ENCODE measurements at regions of chr17 and their contacts with region 1.

Region 1: GRCh38 chr17:41665566-41666236 is 23.0 kb upstream of the EIF1 start:
- DNase-seq: peak; percentile 98
- H3K4me3 Mint-ChIP-seq: peak overlapping the region; percentile 89
- H3K27ac Mint-ChIP-seq: peak overlapping the region; percentile 99
- H3K4me1 Mint-ChIP-seq: peaks cover 48% of the 10 kb centered on the region
- H3K27me3 Mint-ChIP-seq: peaks cover 12% of the 10 kb centered on the region

Region 2: GRCh38 chr17:40559954-40560591 is 1105.6 kb before region 1 on chr17:
- intact Hi-C with region 1: loop called (anchors 5 kb)
- DNase-seq: peak; percentile 95
- H3K4me3 Mint-ChIP-seq: peak overlapping the region; percentile 95
- H3K27ac Mint-ChIP-seq: peak overlapping the region; percentile 100
- H3K4me1 Mint-ChIP-seq: peaks cover 71% of the 10 kb centered on the region
- H3K27me3 Mint-ChIP-seq: no peaks in the 10 kb centered on the region

Region 3: GRCh38 chr17:40803617-40804082 is 862.1 kb before region 1 on chr17:
- intact Hi-C with region 1: loop called (anchors 1 kb)
- DNase-seq: peak; percentile 91
- H3K4me3 Mint-ChIP-seq: no peak overlapping the region
- H3K27ac Mint-ChIP-seq: no peak overlapping the region
- H3K4me1 Mint-ChIP-seq: peaks cover 2% of the 10 kb centered on the region
- H3K27me3 Mint-ChIP-seq: peaks cover 44% of the 10 kb centered on the region

Region 4: DNA sequence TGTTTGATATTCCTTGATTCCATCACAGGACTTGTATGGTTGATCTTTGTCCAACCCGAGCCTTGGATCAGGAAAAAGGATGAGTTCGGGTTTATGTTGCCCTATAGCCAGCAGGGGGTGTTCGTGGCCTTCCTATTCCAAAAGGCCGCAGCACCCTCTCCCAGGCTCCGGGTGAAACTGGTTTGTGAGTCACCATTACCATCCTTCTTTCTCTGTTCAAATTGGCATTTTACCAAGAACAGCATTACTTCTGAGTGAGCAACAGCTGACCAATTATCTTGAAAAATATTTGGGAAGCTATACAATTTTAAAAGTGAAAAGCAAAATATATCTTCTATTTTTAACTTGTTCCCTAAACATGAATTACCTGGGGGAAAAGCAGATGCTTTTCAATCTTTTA is 756.4 kb before region 1 on chr17:
- intact Hi-C with region 1: loop called (anchors 1 kb)
- DNase-seq: peak; percentile 85
- H3K4me3 Mint-ChIP-seq: no peak overlapping the region
- H3K27ac Mint-ChIP-seq: no peak overlapping the region
- H3K4me1 Mint-ChIP-seq: no peaks in the 10 kb centered on the region
- H3K27me3 Mint-ChIP-seq: peaks cover 27% of the 10 kb centered on the region

Region 5: GRCh38 chr17:41486809-41487720 is 178.6 kb before region 1 on chr17:
- intact Hi-C with region 1: loop called (anchors 5 kb)
- DNase-seq: peak; percentile 80
- H3K4me3 Mint-ChIP-seq: no peak overlapping the region
- H3K27ac Mint-ChIP-seq: no peak overlapping the region
- H3K4me1 Mint-ChIP-seq: no peaks in the 10 kb centered on the region
- H3K27me3 Mint-ChIP-seq: no peaks in the 10 kb centered on the region

Region 6: GRCh38 chr17:41579484-41580243 is 86.0 kb before region 1 on chr17:
- intact Hi-C with region 1: loop called (anchors 1 kb)
- DNase-seq: peak; percentile 94
- H3K4me3 Mint-ChIP-seq: no peak overlapping the region
- H3K27ac Mint-ChIP-seq: no peak overlapping the region
- H3K4me1 Mint-ChIP-seq: peaks cover 3% of the 10 kb centered on the region
- H3K27me3 Mint-ChIP-seq: peaks cover 20% of the 10 kb centered on the region

Region 7: GRCh38 chr17:41678907-41679739 is 13.4 kb after region 1 on chr17:
- intact Hi-C with region 1: loop called (anchors 1 kb)
- DNase-seq: peak; percentile 94
- H3K4me3 Mint-ChIP-seq: peak overlapping the region; percentile 86
- H3K27ac Mint-ChIP-seq: peak overlapping the region; percentile 98
- H3K4me1 Mint-ChIP-seq: peaks cover 51% of the 10 kb centered on the region
- H3K27me3 Mint-ChIP-seq: no peaks in the 10 kb centered on the region

Region 8: GRCh38 chr17:42101513-42102319 is 436.0 kb after region 1 on chr17:
- intact Hi-C with region 1: no loop called
- DNase-seq: peak; percentile 91
- H3K4me3 Mint-ChIP-seq: no peak overlapping the region
- H3K27ac Mint-ChIP-seq: no peak overlapping the region
- H3K4me1 Mint-ChIP-seq: peaks cover 7% of the 10 kb centered on the region
- H3K27me3 Mint-ChIP-seq: peaks cover 16% of the 10 kb centered on the region